MCF 10A (cell line): ENCODE measurements at regions of chr17 and their contacts with region 1.

Region 1: GRCh38 chr17:41548844-41549595 is 20.9 kb upstream of the KRT19 start:
- DNase-seq: peak; percentile 93
- H3K4me3 Mint-ChIP-seq: peak overlapping the region; percentile 47
- H3K27ac Mint-ChIP-seq: peak overlapping the region; percentile 78
- H3K4me1 Mint-ChIP-seq: peaks cover 44% of the 10 kb centered on the region
- H3K27me3 Mint-ChIP-seq: no peaks in the 10 kb centered on the region
- CTCF ChIP-seq: peak; percentile 63

Region 2: DNA sequence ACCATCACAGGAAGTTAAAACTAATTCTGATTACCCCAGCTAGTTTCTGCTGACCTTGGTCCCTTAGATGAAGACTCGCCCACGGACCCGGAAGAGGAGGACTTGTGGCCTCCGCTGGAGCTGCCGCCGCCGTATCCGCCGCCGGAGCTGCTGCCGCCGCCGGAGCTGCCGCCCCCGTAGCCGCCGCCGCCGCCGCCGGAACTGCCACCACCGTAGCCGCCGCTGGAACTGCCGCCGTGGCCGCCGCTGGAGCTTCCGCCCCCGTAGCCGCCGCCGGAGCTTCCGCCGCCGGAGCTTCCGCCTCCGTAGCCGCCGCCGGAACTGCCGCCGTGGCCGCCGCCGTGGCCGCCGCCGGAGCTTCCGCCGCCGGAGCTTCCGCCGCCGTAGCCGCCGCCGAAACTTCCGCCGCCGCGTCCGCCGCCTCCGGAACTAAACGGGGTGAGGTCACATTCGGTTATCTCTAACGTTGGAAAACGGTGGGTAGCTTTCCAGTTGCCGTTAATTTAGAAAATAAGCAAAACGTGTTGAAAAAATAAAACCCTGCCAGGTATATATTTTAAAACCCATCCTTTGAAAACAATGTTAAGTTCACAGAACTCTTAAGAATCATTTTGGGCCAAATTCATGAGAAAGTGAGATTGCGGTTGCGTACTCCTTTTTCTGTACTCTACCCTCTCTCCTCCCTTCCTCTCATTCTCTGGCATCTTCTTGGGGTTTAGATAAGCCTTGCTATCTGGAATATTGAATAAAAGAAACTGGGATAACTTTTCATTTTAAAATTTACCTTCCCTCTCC is 730.1 kb before region 1 on chr17:
- CTCF ChIA-PET with region 1: interaction called, 7 read pairs
- POLR2A ChIA-PET with region 1: interaction called, 10 read pairs
- intact Hi-C with region 1: no loop called
- DNase-seq: peak; percentile 69
- H3K4me3 Mint-ChIP-seq: peak overlapping the region; percentile 83
- H3K27ac Mint-ChIP-seq: peak overlapping the region; percentile 95
- H3K4me1 Mint-ChIP-seq: peaks cover 28% of the 10 kb centered on the region
- H3K27me3 Mint-ChIP-seq: no peaks in the 10 kb centered on the region
- CTCF ChIP-seq: no peak

Region 3: GRCh38 chr17:40915199-40915661 is 633.8 kb before region 1 on chr17:
- CTCF ChIA-PET with region 1: interaction called, 48 read pairs
- POLR2A ChIA-PET with region 1: interaction called, 41 read pairs
- intact Hi-C with region 1: no loop called
- DNase-seq: peak; percentile 87
- H3K4me3 Mint-ChIP-seq: no peak overlapping the region
- H3K27ac Mint-ChIP-seq: peak overlapping the region; percentile 98
- H3K4me1 Mint-ChIP-seq: peaks cover 16% of the 10 kb centered on the region
- H3K27me3 Mint-ChIP-seq: no peaks in the 10 kb centered on the region
- CTCF ChIP-seq: no peak

Region 4: GRCh38 chr17:41505809-41506731 is 43.0 kb before region 1 on chr17:
- CTCF ChIA-PET with region 1: interaction called, 20 read pairs
- POLR2A ChIA-PET with region 1: no interaction called
- intact Hi-C with region 1: no loop called
- DNase-seq: no peak
- H3K4me3 Mint-ChIP-seq: no peak overlapping the region
- H3K27ac Mint-ChIP-seq: no peak overlapping the region
- H3K4me1 Mint-ChIP-seq: no peaks in the 10 kb centered on the region
- H3K27me3 Mint-ChIP-seq: no peaks in the 10 kb centered on the region
- CTCF ChIP-seq: no peak

Region 5: GRCh38 chr17:41559548-41559947 is 10.5 kb after region 1 on chr17:
- CTCF ChIA-PET with region 1: interaction called, 65 read pairs
- POLR2A ChIA-PET with region 1: interaction called, 8 read pairs
- intact Hi-C with region 1: no loop called
- DNase-seq: peak; percentile 50
- H3K4me3 Mint-ChIP-seq: no peak overlapping the region
- H3K27ac Mint-ChIP-seq: no peak overlapping the region
- H3K4me1 Mint-ChIP-seq: peaks cover 2% of the 10 kb centered on the region
- H3K27me3 Mint-ChIP-seq: peaks cover 8% of the 10 kb centered on the region
- CTCF ChIP-seq: no peak

Region 6: GRCh38 chr17:41624208-41625101 is 75.4 kb after region 1 on chr17 and contains the start of gene KRT17:
- CTCF ChIA-PET with region 1: interaction called, 12 read pairs
- POLR2A ChIA-PET with region 1: interaction called, 20 read pairs
- intact Hi-C with region 1: no loop called
- DNase-seq: peak; percentile 93
- H3K4me3 Mint-ChIP-seq: peak within 1 kb of the TSS; percentile 86
- H3K27ac Mint-ChIP-seq: peak within 1 kb of the TSS; percentile 89
- H3K4me1 Mint-ChIP-seq: peaks cover 47% of the 10 kb centered on the region
- H3K27me3 Mint-ChIP-seq: no peaks in the 10 kb centered on the region
- CTCF ChIP-seq: peak; percentile 19
- total RNA-seq, gene KRT17: 1,990 and 4,105 TPM in 2 replicates

Region 7: DNA sequence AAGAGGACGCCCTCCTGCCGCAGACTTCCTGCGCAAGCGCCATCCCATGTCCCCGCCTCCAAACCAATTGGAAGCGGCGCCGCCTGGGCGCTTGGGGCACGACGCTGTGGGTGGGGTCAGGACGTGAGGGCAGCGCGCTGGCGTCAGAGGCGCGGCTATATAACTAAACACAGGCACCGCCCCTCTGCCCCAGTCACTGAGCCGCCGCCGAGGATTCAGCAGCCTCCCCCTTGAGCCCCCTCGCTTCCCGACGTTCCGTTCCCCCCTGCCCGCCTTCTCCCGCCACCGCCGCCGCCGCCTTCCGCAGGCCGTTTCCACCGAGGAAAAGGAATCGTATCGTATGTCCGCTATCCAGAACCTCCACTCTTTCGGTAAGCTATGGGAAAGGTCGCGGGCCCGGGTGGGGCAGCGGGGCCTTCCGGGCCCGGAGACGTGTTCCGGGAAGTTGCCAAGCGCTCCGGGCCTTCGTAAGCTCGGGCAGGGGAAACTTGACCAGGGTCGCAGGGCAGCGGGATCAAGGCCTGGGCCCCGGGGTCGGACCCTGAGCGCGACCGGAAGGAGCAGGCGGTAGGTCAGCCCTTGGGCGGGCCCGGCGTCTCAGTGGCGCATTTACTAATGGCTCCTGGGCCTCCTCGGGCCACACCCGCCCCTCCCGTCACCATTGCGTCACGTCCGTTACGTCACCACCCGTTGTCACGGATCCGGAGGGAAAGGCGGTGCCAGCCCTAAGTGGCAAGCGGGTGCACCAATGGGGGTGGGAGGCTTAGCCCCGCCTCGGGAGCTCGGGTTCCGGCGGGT is 139.9 kb after region 1 on chr17 and contains the start of gene EIF1:
- CTCF ChIA-PET with region 1: interaction called, 3 read pairs
- POLR2A ChIA-PET with region 1: interaction called, 26 read pairs
- intact Hi-C with region 1: no loop called
- DNase-seq: peak; percentile 100
- H3K4me3 Mint-ChIP-seq: peak within 1 kb of the TSS; percentile 94
- H3K27ac Mint-ChIP-seq: peak within 1 kb of the TSS; percentile 100
- H3K4me1 Mint-ChIP-seq: peaks cover 6% of the 10 kb centered on the region
- H3K27me3 Mint-ChIP-seq: no peaks in the 10 kb centered on the region
- CTCF ChIP-seq: no peak
- total RNA-seq, gene EIF1: 1,945 and 2,169 TPM in 2 replicates